Left ventricle myocardium inferior (tissue), 1 donor: ENCODE measurements at regions of chr9 and their contacts with region 1.

Region 1: GRCh38 chr9:113508111-113508749 is 44.7 kb downstream of the RGS3 start:
- DNase-seq: no peak
- H3K4me3 ChIP-seq: no peak overlapping the region
- H3K27ac ChIP-seq: peak overlapping the region; percentile 91
- H3K4me1 ChIP-seq: peaks cover 85% of the 10 kb centered on the region
- H3K27me3 ChIP-seq: no peaks in the 10 kb centered on the region
- CTCF ChIP-seq: no peak

Region 2: DNA sequence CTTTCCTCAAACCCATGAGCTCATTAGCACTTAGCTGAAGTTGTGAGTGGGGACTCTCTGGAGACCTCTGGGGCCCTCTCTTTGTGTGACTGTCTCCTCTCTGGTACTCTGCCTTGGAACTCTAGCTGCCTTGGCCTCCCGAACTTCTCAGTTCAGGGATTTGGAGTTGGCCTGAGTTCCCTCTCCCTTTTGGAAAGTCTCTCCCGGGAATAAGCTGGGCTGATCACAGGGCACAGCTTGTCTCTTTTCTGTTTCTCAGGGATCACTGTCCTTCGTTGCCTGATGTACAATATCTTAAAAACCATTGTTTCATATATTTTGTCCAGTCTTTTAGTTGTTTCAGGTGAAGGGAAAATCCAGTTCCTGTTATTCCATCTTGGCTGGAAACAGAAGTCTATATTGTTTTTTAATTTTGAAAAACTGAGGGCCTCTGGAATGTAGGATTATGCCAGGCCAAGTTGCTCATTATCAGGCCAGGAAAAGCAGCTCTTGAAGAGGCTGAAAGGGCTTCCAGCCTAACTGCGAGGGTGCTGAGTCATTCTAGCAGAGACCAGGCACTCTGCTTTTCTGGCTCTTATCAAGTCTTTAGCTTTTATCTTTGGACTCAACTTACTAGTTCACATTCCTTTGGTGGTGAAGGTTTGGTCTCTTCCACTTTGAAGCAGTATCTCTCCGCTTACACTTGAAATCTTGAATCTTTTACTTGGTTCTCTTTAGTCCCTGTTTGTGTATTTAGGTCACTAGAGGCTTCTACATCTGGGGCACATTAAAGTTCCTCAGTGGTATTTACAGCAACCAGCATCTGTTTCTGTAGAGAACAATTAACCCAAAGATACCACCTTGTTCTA is 53.1 kb before region 1 on chr9:
- intact Hi-C with region 1: loop called (anchors 10 kb)
- DNase-seq: peak; percentile 48
- H3K4me3 ChIP-seq: no peak overlapping the region
- H3K27ac ChIP-seq: peak overlapping the region; percentile 93
- H3K4me1 ChIP-seq: peaks cover 45% of the 10 kb centered on the region
- H3K27me3 ChIP-seq: no peaks in the 10 kb centered on the region
- CTCF ChIP-seq: no peak